Sigmoid colon (tissue), 7 donors: ENCODE measurements at regions of chr6 and their contacts with region 1.

Region 1: GRCh38 chr6:14210663-14211561 is 93.3 kb downstream of the CD83 start:
- DNase-seq: peak; percentile 96
- H3K4me3 ChIP-seq: peak overlapping the region; percentile 62 to 72 (median 70)
- H3K27ac ChIP-seq: peak overlapping the region; percentile 76 to 84 (median 82)
- H3K4me1 ChIP-seq: peaks cover 0 to 14% (median 9%) of the 10 kb centered on the region in 4 donors
- H3K27me3 ChIP-seq: no peaks in the 10 kb centered on the region
- CTCF ChIP-seq: peak in 2 of 4 experiments; percentile 45 to 62
- EP300 ChIP-seq: peak in 1 of 4 donors; percentile 7
- POLR2A ChIP-seq: peak in 1 of 2 donors; percentile 42

Region 2: GRCh38 chr6:15443119-15443830 is 1232.4 kb after region 1 on chr6:
- intact Hi-C with region 1: loop called (anchors 2 kb)
- DNase-seq: no peak
- H3K4me3 ChIP-seq: no peak overlapping the region
- H3K27ac ChIP-seq: peak overlapping the region in 2 of 4 donors; percentile 24 to 30
- H3K4me1 ChIP-seq: peaks cover 0 to 56% (median 37%) of the 10 kb centered on the region in 4 donors
- H3K27me3 ChIP-seq: no peaks in the 10 kb centered on the region
- CTCF ChIP-seq: no peak
- EP300 ChIP-seq: no peak
- POLR2A ChIP-seq: no peak